AG04450 (cell line): ENCODE measurements at regions of chr12 and their contacts with region 1.

Region 1: GRCh38 chr12:120301962-120302815 is at the start of gene SIRT4:
- DNase-seq: peak; percentile 85
- H3K4me3 ChIP-seq: peak within 1 kb of the TSS; percentile 76
- H3K27ac ChIP-seq: peak within 1 kb of the TSS; percentile 86
- H3K27me3 ChIP-seq: no peaks in the 10 kb centered on the region
- CTCF ChIP-seq: peak; percentile 80
- polyA plus RNA-seq, gene SIRT4: 1.4 and 1.9 TPM in 2 replicates

Region 2: GRCh38 chr12:119964929-119965328 is 337.3 kb before region 1 on chr12:
- CTCF ChIA-PET with region 1: no interaction called
- POLR2A ChIA-PET with region 1: interaction called, 10 read pairs
- DNase-seq: no peak
- H3K4me3 ChIP-seq: no peak overlapping the region
- H3K27ac ChIP-seq: no peak overlapping the region
- H3K27me3 ChIP-seq: peaks cover 2% of the 10 kb centered on the region
- CTCF ChIP-seq: no peak

Region 3: GRCh38 chr12:120437754-120438494 is 135.7 kb after region 1 on chr12 and contains the start of gene COX6A1:
- CTCF ChIA-PET with region 1: interaction called, 10 read pairs
- POLR2A ChIA-PET with region 1: no interaction called
- DNase-seq: peak; percentile 90
- H3K4me3 ChIP-seq: peak within 1 kb of the TSS; percentile 95
- H3K27ac ChIP-seq: no peak within 1 kb of the TSS
- H3K27me3 ChIP-seq: peaks cover 2% of the 10 kb centered on the region
- CTCF ChIP-seq: 0 out of 2 replicates have a peak, but pooled peaks have one; percentile 16
- polyA plus RNA-seq, gene COX6A1: 414 and 536 TPM in 2 replicates

Region 4: GRCh38 chr12:120961604-120962531 is 659.7 kb after region 1 on chr12:
- CTCF ChIA-PET with region 1: no interaction called
- POLR2A ChIA-PET with region 1: no interaction called
- DNase-seq: no peak
- H3K4me3 ChIP-seq: no peak overlapping the region
- H3K27ac ChIP-seq: no peak overlapping the region
- H3K27me3 ChIP-seq: peaks cover 6% of the 10 kb centered on the region
- CTCF ChIP-seq: no peak